ENCODE measurements at regions of chr4 and their contacts with region 1.

Region 1: GRCh38 chr4:52157641-52158316 is 106.7 kb downstream of the SPATA18 start:
- DNase-seq: no peak

Region 2: GRCh38 chr4:51997647-51998046 is 160.1 kb before region 1 on chr4:
- intact Hi-C with region 1: no loop called
- DNase-seq: no peak

Region 3: GRCh38 chr4:53489279-53489889 is 1331.6 kb after region 1 on chr4:
- intact Hi-C with region 1: loop called in 1 of 2 experiments (anchors 5 kb)
- DNase-seq: no peak

Measured in posterior vena cava (tissue), 2 donors.